Brain microvascular endothelial cell (primary cell): ENCODE measurements at regions of chr15 and their contacts with region 1.

Region 1: DNA sequence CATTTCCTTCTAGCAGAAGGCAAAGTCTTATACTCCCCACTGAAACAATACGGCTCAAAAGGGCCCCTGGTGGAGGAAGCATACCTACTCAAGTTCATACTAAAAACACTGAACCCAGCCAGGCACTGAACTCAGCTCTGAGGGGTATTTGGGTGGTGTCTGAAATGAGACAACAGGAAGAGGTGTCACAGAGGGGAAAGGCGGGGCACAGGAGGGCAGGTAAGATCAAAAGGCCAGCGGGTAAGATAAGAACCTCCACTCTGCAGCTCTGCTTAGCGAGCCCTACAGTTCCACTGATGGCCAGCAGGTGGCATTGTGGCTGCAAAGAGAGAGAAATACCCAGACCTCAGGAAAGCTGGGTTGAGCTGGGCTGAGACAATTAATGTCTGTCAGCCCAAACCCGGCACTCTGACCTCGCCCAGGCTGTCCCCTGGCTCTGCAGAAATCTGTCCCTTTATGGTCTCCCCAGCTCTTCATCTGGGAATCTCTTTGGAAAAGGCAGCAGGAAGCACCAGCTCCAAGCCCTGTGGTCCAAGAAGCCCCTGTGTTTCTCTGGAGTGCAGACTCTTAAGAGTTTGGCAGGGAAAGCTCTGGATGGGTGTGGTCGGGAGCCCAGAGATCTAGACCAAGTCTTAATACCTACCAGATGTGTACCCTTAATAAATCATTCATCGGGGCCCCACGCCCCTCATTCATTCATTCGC is 8.4 kb downstream of the MFGE8 start:
- DNase-seq: peak; percentile 70
- H3K4me3 ChIP-seq: no peak overlapping the region
- H3K27ac ChIP-seq: no peak overlapping the region
- H3K27me3 ChIP-seq: no peaks in the 10 kb centered on the region
- CTCF ChIP-seq: peak; percentile 97

Region 2: GRCh38 chr15:87354661-87355410 is 1549.9 kb before region 1 on chr15:
- in situ Hi-C with region 1: no loop called
- DNase-seq: peak; percentile 71
- H3K4me3 ChIP-seq: no peak overlapping the region
- H3K27ac ChIP-seq: peak overlapping the region; percentile 46
- H3K27me3 ChIP-seq: no peaks in the 10 kb centered on the region
- CTCF ChIP-seq: no peak

Region 3: DNA sequence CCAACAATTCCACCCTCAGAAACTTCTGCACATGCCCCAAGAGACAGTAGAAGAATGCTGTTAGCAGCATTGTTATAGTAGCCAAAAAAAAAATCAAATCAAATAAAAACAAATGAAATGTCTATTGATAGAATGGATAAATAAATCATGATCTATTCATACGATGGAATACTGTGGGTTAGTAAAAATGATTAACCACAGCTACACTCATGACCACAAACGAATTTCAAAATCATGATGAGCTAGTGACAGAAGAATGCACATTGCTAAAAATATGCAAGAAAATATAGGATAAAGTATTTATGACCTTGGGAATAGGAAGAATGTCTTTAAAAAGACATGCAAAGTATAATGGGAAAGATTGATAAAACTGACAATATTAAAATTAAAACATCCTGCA is 159.1 kb before region 1 on chr15:
- in situ Hi-C with region 1: no loop called
- DNase-seq: peak; percentile 34
- H3K4me3 ChIP-seq: no peak overlapping the region
- H3K27ac ChIP-seq: no peak overlapping the region
- H3K27me3 ChIP-seq: no peaks in the 10 kb centered on the region
- CTCF ChIP-seq: no peak

Region 4: GRCh38 chr15:89017370-89018066 is 112.7 kb after region 1 on chr15:
- in situ Hi-C with region 1: loop called (anchors 25 kb)
- DNase-seq: peak; percentile 71
- H3K4me3 ChIP-seq: peak overlapping the region; percentile 51
- H3K27ac ChIP-seq: no peak overlapping the region
- H3K27me3 ChIP-seq: no peaks in the 10 kb centered on the region
- CTCF ChIP-seq: peak; percentile 94